OCI-LY7 (cell line): ENCODE measurements at regions of chr20 and their contacts with region 1.

Region 1: GRCh38 chr20:53718142-53719021 is 124.7 kb upstream of the ZNF217 start:
- DNase-seq: no peak
- H3K4me3 ChIP-seq: no peak overlapping the region
- H3K27ac ChIP-seq: no peak overlapping the region
- H3K4me1 ChIP-seq: peaks cover 20% of the 10 kb centered on the region
- CTCF ChIP-seq: no peak

Region 2: DNA sequence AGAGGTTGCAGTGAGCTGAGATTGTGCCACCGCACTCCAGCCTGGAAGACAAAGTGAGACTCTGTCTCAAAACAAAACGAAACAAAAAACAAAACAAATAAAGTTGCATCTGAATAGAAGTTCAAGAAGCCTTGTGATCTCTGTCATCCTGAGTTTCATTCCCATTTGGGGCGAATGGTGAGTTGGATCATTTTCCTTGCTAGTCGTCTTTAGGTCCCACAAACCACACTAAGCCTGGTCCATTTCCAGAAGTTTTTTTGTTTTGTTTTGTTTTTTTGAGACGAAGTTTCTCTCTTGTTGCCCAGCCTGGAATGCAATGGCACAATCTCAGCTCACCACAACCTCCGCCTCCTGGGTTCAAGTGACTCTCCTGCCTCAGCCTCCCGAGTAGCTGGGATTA is 158.6 kb before region 1 on chr20:
- CTCF ChIA-PET with region 1: no interaction called
- POLR2A ChIA-PET with region 1: no interaction called
- intact Hi-C with region 1: no loop called
- DNase-seq: no peak
- H3K4me3 ChIP-seq: no peak overlapping the region
- H3K27ac ChIP-seq: no peak overlapping the region
- H3K4me1 ChIP-seq: no peaks in the 10 kb centered on the region
- CTCF ChIP-seq: no peak

Region 3: DNA sequence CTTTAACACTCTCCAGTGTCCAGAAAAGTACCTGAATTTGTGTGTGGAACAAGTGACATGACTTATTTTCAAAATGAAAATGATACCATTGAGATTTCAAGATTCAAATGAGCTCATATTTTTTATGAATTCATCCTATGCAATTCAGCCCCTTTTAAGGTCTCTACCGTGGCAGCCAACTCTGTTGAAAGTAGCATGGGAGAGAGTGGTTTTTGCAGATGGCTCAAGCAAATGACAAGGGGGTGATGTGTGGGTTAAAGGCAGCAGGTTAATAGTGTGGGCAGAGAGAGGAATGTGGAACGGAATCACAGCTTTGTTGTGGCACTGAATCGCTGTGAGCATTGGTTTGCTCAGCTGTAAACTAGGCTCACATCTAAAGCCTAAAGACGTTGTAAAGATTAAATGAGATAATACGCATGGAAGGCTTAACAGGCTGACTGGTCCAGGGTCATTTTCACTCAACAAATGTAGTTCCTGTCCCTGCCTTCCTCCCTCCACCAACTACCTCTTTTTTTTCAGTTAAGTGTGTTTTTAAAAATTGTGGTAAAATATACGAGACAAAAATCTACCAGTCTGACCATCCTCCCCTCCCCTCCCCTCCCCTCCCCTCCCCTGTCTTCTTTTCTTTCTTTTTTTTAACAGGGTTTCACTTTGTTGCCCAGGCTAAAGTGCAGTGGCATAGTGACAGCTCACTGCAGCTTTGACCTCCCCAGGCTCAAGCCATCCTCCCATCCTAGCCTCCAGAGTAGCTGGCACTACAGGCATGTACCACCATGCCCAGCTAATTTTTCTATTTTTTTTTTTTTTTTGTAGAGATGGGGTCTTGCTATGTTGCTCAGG is 10.0 kb before region 1 on chr20:
- CTCF ChIA-PET with region 1: no interaction called
- POLR2A ChIA-PET with region 1: interaction called, 12 read pairs
- intact Hi-C with region 1: no loop called
- DNase-seq: peak; percentile 38
- H3K4me3 ChIP-seq: peak overlapping the region; percentile 22
- H3K27ac ChIP-seq: peak overlapping the region; percentile 50
- H3K4me1 ChIP-seq: peaks cover 30% of the 10 kb centered on the region
- CTCF ChIP-seq: no peak

Region 4: DNA sequence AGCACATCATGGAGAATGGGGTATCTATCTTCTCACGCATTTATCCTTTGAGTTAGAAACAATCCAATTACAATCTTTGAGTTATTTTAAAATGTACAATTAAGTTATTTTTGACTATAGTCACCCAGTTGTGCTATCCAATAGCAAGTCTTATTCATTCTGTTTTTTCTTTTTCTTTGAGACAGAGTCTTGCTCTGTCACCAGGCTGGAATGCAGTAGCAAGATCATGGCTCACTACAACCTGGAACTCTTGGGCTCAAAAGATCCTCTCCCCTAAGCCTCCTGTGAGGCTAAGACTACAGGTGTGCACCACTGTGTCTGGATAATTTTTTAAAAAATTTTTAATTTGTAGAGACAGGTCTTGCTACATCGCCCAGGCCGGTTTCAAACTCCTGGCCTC is 76.8 kb after region 1 on chr20:
- CTCF ChIA-PET with region 1: no interaction called
- POLR2A ChIA-PET with region 1: no interaction called
- intact Hi-C with region 1: no loop called
- DNase-seq: no peak
- H3K4me3 ChIP-seq: no peak overlapping the region
- H3K27ac ChIP-seq: no peak overlapping the region
- H3K4me1 ChIP-seq: no peaks in the 10 kb centered on the region
- CTCF ChIP-seq: no peak